Activated CD4-positive, alpha-beta T cell treated with anti-CD3 and anti-CD28 coated beads, Interleukin-2, amount 10 ng/mL, durations not matched to agents 24 days and 14 days (primary cell): ENCODE measurements at regions of chr14 and their contacts with region 1.

Region 1: GRCh38 chr14:78005325-78005724 is 164.8 kb upstream of the NRXN3 start:
- DNase-seq: peak; percentile 83
- H3K4me3 Mint-ChIP-seq: no peak overlapping the region
- H3K27ac Mint-ChIP-seq: peak overlapping the region; percentile 74
- H3K4me1 Mint-ChIP-seq: peaks cover 13% of the 10 kb centered on the region
- H3K27me3 Mint-ChIP-seq: peaks cover 8% of the 10 kb centered on the region

Region 2: DNA sequence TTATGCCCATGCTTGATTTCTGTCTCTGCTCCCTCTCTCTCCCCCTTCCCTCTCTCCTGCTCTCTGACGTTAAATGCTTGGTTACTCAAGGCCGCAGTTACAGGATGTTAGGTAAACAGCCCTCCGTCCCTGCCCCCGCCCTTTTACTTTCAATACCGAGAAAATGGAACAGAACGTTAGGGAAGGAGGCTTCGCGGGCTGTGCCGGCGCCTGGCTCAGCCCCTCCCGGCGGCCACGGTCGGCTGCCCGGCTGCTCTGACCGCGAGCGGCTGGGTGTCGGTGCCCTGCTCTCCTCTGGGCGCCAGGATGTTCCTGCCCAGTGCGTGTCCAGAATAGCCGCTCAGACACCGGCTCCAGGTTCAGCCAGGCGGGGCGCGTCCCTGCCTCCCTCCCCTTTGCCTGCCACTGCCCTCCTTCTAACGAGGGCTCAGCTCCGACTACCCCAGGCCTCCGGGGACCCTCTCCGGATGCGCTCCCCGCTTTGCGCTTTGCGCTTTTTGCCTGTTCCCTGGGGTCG is 39.3 kb before region 1 on chr14:
- intact Hi-C with region 1: loop called (anchors 5 kb)
- DNase-seq: peak; percentile 89
- H3K4me3 Mint-ChIP-seq: peak overlapping the region; percentile 67
- H3K27ac Mint-ChIP-seq: peak overlapping the region; percentile 54
- H3K4me1 Mint-ChIP-seq: peaks cover 3% of the 10 kb centered on the region
- H3K27me3 Mint-ChIP-seq: peaks cover 11% of the 10 kb centered on the region

Region 3: DNA sequence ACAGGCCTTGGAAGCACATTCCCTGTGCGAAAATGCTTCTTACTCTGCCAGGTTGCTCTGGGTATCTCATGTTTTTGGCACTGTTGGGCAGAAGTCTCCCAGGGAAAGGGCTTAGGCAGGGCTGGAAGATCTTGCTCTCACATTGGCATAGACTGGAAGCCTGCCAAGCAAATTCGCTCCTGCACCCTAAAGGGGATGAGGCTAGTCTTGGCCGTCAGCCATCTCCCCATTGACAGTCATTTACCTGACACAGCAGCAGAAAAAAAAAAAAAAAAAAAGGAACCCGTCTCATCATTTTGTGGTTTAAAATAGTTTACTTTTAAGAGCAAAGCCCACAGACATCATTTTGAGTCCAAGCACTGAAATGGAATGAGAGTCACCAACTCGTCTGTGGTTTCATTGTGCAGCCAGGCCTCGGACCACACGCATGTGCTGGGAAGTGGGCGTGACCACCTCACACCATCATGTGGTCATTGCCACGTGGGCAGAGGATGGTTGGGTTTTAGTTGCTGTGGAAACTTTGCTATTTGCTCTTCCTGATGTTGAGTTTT is 249.7 kb after region 1 on chr14:
- intact Hi-C with region 1: loop called (anchors 5 kb)
- DNase-seq: no peak
- H3K4me3 Mint-ChIP-seq: no peak overlapping the region
- H3K27ac Mint-ChIP-seq: no peak overlapping the region
- H3K4me1 Mint-ChIP-seq: peaks cover 5% of the 10 kb centered on the region
- H3K27me3 Mint-ChIP-seq: no peaks in the 10 kb centered on the region